Motor neuron (in vitro differentiated cells): ENCODE measurements at regions of chr2 and their contacts with region 1.

Region 1: GRCh38 chr2:74261204-74261864 is 62.9 kb downstream of the MTHFD2 start:
- ATAC-seq: peak in 2 of 8 experiments; percentile 56 to 69
- H3K4me3 ChIP-seq: no peak overlapping the region
- H3K27ac ChIP-seq: no peak overlapping the region
- H3K4me1 ChIP-seq: no peaks in the 10 kb centered on the region

Region 2: GRCh38 chr2:74066518-74067203 is 194.7 kb before region 1 on chr2:
- in situ Hi-C with region 1: no loop called
- ATAC-seq: peak in 1 of 8 experiments; percentile 67
- H3K4me3 ChIP-seq: no peak overlapping the region
- H3K27ac ChIP-seq: no peak overlapping the region
- H3K4me1 ChIP-seq: no peaks in the 10 kb centered on the region

Region 3: DNA sequence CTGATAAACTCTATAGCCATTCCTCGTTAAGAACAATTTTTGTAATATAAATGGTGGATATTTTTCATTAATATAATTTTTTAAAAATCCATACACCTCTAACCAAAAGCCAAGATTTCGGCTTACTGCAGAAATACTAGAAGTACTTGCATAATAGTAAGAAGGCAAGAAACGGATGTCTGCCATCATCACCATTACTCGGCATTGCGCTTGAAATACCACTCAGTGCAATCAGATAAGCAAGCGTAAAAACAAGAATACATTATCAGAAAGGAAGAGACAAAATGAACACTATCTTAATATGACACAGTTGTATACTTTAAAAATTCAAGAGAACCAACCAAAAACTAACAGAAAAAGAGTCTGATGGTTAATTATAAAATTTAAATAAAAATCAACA is 98.4 kb before region 1 on chr2:
- in situ Hi-C with region 1: no loop called
- ATAC-seq: no peak
- H3K4me3 ChIP-seq: no peak overlapping the region
- H3K27ac ChIP-seq: no peak overlapping the region
- H3K4me1 ChIP-seq: no peaks in the 10 kb centered on the region

Region 4: DNA sequence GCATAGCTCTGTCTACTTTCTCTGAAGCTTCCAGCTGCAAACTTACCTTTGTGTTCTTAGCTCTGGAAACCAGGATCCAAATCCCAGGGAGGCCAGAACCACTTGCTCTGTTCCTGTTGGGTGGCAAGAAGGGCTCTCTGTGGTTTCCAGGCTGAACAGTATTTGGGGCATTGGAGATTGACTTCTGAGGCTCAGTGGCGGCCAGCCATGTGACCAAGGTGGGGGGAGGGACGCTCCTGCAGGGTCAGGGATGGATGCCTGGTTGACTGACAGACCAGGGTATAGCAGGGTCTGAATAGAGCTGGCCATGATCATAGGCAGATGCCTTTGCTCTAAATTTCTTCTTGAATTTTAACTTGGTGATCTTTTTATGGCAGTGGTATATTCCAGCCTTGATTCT is 66.7 kb after region 1 on chr2:
- in situ Hi-C with region 1: loop called in 1 of 9 experiments (anchors 10 kb)
- ATAC-seq: no peak
- H3K4me3 ChIP-seq: no peak overlapping the region
- H3K27ac ChIP-seq: no peak overlapping the region
- H3K4me1 ChIP-seq: no peaks in the 10 kb centered on the region

Region 5: GRCh38 chr2:74421221-74421870 is 160.0 kb after region 1 on chr2 and contains the starts of genes C2orf81 and WDR54:
- in situ Hi-C with region 1: no loop called
- ATAC-seq: peak; percentile 79 to 97 (median 95)
- H3K4me3 ChIP-seq: peak within 1 kb of the TSS; percentile 52 to 70 (median 57)
- H3K27ac ChIP-seq: peak within 1 kb of the TSS; percentile 89 to 97
- H3K4me1 ChIP-seq: peaks cover 0 to 17% of the 10 kb centered on the region in 2 donors
- total RNA-seq, gene C2orf81: 1.6 to 5.8 (median 2.7) TPM
- total RNA-seq, gene WDR54: 15.1 to 63.7 (median 49.5) TPM